PC-3 (cell line): ENCODE measurements at regions of chr12 and their contacts with region 1.

Region 1: GRCh38 chr12:61654698-61655097 is 605.5 kb upstream of the USP15 start:
- DNase-seq: peak; percentile 45
- ATAC-seq: peak; percentile 53; the same call in 1 of the 2 replicates
- H3K4me3 ChIP-seq: no peak overlapping the region
- H3K27ac ChIP-seq: no peak overlapping the region
- H3K4me1 ChIP-seq: no peaks in the 10 kb centered on the region
- H3K27me3 ChIP-seq: no peaks in the 10 kb centered on the region
- CTCF ChIP-seq: peak; percentile 58

Region 2: GRCh38 chr12:61993734-61994345 is 339.1 kb after region 1 on chr12:
- CTCF ChIA-PET with region 1: no interaction called
- POLR2A ChIA-PET with region 1: no interaction called
- intact Hi-C with region 1: loop called (anchors 1 kb)
- DNase-seq: peak; percentile 61
- ATAC-seq: peak; percentile 88
- H3K4me3 ChIP-seq: no peak overlapping the region
- H3K27ac ChIP-seq: no peak overlapping the region
- H3K4me1 ChIP-seq: no peaks in the 10 kb centered on the region
- H3K27me3 ChIP-seq: peaks cover 9% of the 10 kb centered on the region; the same call in 1 of the 2 replicates
- CTCF ChIP-seq: peak; percentile 75